Activated naive CD4-positive, alpha-beta T cell treated with anti-CD3 and anti-CD28 coated beads for 36 hours (primary cell): ENCODE measurements at regions of chr3 and their contacts with region 1.

Region 1: GRCh38 chr3:12810013-12810780 is 13.7 kb downstream of the CAND2 start:
- DNase-seq: peak; percentile 94
- H3K4me3 Mint-ChIP-seq: peak overlapping the region; percentile 47
- H3K27ac Mint-ChIP-seq: no peak overlapping the region
- H3K4me1 Mint-ChIP-seq: peaks cover 4% of the 10 kb centered on the region
- H3K27me3 Mint-ChIP-seq: no peaks in the 10 kb centered on the region

Region 2: GRCh38 chr3:12706504-12707253 is 103.5 kb before region 1 on chr3:
- CTCF ChIA-PET with region 1: interaction called, 4 read pairs
- intact Hi-C with region 1: loop called (anchors 1 kb)
- DNase-seq: peak; percentile 80
- H3K4me3 Mint-ChIP-seq: no peak overlapping the region
- H3K27ac Mint-ChIP-seq: no peak overlapping the region
- H3K4me1 Mint-ChIP-seq: no peaks in the 10 kb centered on the region
- H3K27me3 Mint-ChIP-seq: no peaks in the 10 kb centered on the region

Region 3: GRCh38 chr3:12782172-12782815 is 27.9 kb before region 1 on chr3:
- CTCF ChIA-PET with region 1: interaction called, 30 read pairs
- intact Hi-C with region 1: no loop called
- DNase-seq: no peak
- H3K4me3 Mint-ChIP-seq: no peak overlapping the region
- H3K27ac Mint-ChIP-seq: no peak overlapping the region
- H3K4me1 Mint-ChIP-seq: no peaks in the 10 kb centered on the region
- H3K27me3 Mint-ChIP-seq: peaks cover 14% of the 10 kb centered on the region

Region 4: DNA sequence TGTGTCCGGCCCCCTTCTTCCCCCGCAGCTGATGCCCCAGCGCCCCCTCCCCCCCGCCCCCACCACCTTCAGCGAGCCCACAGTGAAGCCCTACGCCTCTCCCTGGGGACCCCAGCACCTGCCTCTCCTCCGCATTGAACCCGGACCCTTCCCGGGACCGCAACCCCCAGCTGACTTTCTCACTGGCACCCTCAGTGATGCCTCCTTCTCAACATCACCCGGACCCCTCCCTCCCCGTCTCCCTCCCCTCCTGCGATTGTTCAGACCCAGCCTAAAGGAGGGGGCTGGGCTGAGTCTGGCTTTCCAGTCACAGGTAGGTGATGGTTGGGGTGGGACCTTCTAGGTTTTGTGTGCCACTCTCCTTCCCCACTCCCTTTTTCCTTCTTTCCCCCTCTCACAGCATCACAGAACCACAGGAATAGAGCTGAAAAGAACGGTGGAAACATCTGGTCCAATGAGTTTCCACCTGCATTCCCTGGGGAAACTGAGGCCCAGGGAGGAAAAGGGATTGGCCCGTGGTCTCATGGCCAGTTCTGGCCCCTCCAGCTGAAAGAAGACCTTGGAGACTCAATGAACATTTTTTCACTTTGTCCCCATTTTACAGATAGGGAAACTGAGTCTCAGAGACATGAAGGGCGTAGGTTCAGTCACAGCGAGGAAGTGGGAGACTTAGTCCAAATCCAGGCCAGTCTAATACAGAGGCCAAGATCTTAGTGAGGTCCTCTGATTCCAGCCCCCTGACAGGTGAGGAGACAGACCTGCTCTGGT is 12.9 kb before region 1 on chr3:
- CTCF ChIA-PET with region 1: interaction called, 10 read pairs
- intact Hi-C with region 1: no loop called
- DNase-seq: no peak
- H3K4me3 Mint-ChIP-seq: peak overlapping the region; percentile 71
- H3K27ac Mint-ChIP-seq: no peak overlapping the region
- H3K4me1 Mint-ChIP-seq: peaks cover 9% of the 10 kb centered on the region
- H3K27me3 Mint-ChIP-seq: no peaks in the 10 kb centered on the region

Region 5: DNA sequence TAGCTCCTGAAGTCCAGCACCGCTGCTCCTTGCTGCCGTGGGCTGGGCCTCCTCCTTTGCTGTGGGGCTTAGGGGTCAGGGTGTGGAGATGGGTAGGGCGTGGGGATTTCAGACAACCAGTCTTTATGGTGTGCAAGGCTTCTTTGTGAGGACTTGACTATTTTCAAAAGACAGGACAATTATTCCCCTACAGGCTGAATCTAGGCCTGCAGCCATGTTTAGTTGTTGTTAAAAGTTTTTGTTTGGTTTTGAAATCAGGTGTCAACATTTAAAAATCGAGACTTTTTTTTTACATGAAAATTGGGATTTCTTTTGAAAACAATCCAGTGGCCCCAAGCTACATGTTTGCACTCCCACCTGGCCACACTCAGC is 20.6 kb after region 1 on chr3:
- CTCF ChIA-PET with region 1: interaction called, 14 read pairs
- intact Hi-C with region 1: no loop called
- DNase-seq: no peak
- H3K4me3 Mint-ChIP-seq: no peak overlapping the region
- H3K27ac Mint-ChIP-seq: no peak overlapping the region
- H3K4me1 Mint-ChIP-seq: peaks cover 2% of the 10 kb centered on the region
- H3K27me3 Mint-ChIP-seq: no peaks in the 10 kb centered on the region